Head of caudate nucleus (tissue), 42 donors: ENCODE measurements at regions of chr4 and their contacts with region 1.

Region 1: GRCh38 chr4:128863312-128864075 is 54.0 kb downstream of the JADE1 start:
- DNase-seq: peak; percentile 65 to 94 (median 86)

Region 2: DNA sequence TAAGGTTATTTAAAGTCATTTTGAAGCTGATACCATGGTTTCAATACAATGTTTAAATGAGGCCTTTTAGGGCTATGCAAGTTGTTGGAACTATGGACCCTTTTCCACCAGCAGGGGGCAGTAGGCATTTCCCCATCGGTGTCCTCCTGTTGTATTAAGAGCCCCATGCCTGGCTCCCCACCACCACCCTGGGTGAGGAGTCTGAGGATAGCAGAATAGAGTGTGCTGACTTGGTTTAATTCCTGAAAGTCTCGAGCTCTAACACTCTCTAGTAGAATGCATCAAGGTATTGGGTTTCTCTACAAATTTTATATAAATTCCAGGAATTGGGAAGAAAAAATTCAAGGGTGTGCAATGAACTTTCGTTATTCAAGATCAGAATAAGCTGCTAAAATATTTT is 288.8 kb before region 1 on chr4:
- intact Hi-C with region 1: loop called (anchors 5 kb)
- DNase-seq: peak; percentile 31 to 96 (median 85)